Activated CD4-positive, alpha-beta T cell treated with anti-CD3 and anti-CD28 coated beads for 36 hours (primary cell): ENCODE measurements at regions of chr11 and their contacts with region 1.

Region 1: GRCh38 chr11:17354601-17354991 is 3.0 kb downstream of the NCR3LG1 start:
- DNase-seq: peak; percentile 76
- ATAC-seq: no peak
- H3K4me3 Mint-ChIP-seq: peak overlapping the region; percentile 77
- H3K27ac Mint-ChIP-seq: no peak overlapping the region
- H3K4me1 Mint-ChIP-seq: peaks cover 35% of the 10 kb centered on the region
- H3K27me3 Mint-ChIP-seq: peaks cover 9% of the 10 kb centered on the region

Region 2: GRCh38 chr11:17207317-17208258 is 147.0 kb before region 1 on chr11 and contains the start of gene PIK3C2A:
- CTCF ChIA-PET with region 1: interaction called, 7 read pairs
- POLR2A ChIA-PET with region 1: no interaction called
- intact Hi-C with region 1: loop called (anchors 1 to 5 kb)
- DNase-seq: peak; percentile 97
- ATAC-seq: peak; percentile 97
- H3K4me3 Mint-ChIP-seq: peak within 1 kb of the TSS; percentile 91
- H3K27ac Mint-ChIP-seq: peak within 1 kb of the TSS; percentile 97
- H3K4me1 Mint-ChIP-seq: peaks cover 40% of the 10 kb centered on the region
- H3K27me3 Mint-ChIP-seq: no peaks in the 10 kb centered on the region
- total RNA-seq, gene PIK3C2A: 23.3 to 27.3 TPM

Region 3: GRCh38 chr11:17298302-17298701 is 56.3 kb before region 1 on chr11:
- CTCF ChIA-PET with region 1: interaction called, 6 read pairs
- POLR2A ChIA-PET with region 1: no interaction called
- intact Hi-C with region 1: loop called (anchors 1 to 2 kb)
- DNase-seq: peak; percentile 83
- ATAC-seq: peak; percentile 82
- H3K4me3 Mint-ChIP-seq: no peak overlapping the region
- H3K27ac Mint-ChIP-seq: no peak overlapping the region
- H3K4me1 Mint-ChIP-seq: peaks cover 40% of the 10 kb centered on the region
- H3K27me3 Mint-ChIP-seq: no peaks in the 10 kb centered on the region

Region 4: DNA sequence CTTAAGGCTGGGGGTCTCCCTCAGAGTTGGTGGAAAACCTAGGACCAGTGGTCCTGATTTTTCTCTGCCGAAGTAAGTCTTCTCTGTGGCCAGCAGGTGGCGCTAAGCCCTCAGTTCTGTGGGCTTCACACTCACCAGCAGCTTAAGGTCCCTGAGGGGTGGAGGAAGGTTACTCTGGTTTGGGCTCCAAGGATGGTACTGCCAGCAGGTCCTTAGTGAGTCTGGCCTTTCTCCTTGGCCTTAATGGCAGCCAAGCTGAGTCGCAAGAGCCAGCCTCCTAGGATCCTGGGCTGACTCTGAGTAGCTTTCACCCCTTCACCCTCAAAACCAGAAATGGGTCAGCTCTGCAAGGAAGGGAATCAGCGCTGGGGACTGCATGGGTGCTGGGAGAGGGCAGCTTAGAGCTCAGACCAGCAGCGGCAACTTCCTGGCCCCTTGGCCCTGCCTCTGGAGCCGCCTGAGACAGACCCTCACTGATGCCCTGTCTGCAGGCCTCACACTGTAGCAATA is 29.5 kb after region 1 on chr11:
- CTCF ChIA-PET with region 1: interaction called, 15 read pairs
- POLR2A ChIA-PET with region 1: no interaction called
- intact Hi-C with region 1: loop called (anchors 1 kb)
- DNase-seq: peak; percentile 90
- ATAC-seq: peak; percentile 64
- H3K4me3 Mint-ChIP-seq: no peak overlapping the region
- H3K27ac Mint-ChIP-seq: no peak overlapping the region
- H3K4me1 Mint-ChIP-seq: no peaks in the 10 kb centered on the region
- H3K27me3 Mint-ChIP-seq: peaks cover 8% of the 10 kb centered on the region

Region 5: GRCh38 chr11:18012863-18013781 is 658.5 kb after region 1 on chr11 and contains the start of gene SERGEF:
- CTCF ChIA-PET with region 1: no interaction called
- POLR2A ChIA-PET with region 1: no interaction called
- intact Hi-C with region 1: loop called in 1 of 2 experiments (anchors 2 kb)
- DNase-seq: peak; percentile 96
- ATAC-seq: peak; percentile 93
- H3K4me3 Mint-ChIP-seq: peak within 1 kb of the TSS; percentile 85
- H3K27ac Mint-ChIP-seq: peak within 1 kb of the TSS; percentile 98
- H3K4me1 Mint-ChIP-seq: peaks cover 39% of the 10 kb centered on the region
- H3K27me3 Mint-ChIP-seq: no peaks in the 10 kb centered on the region
- total RNA-seq, gene SERGEF: 47.5 to 57.5 TPM